Activated T-helper 1 cell treated with anti-CD3 and anti-CD28 coated beads, Interleukin-12 subunit alpha, Interleukin-12 subunit beta, Interleukin-2, Interleukin-4 antibody, amounts not matched to agents 30 ng/mL and 10 ng/mL and 1 ng/mL, durations not matched to agents 14 hours and 24 hours and 36 hours (primary cell): ENCODE measurements at regions of chr12 and their contacts with region 1.

Region 1: DNA sequence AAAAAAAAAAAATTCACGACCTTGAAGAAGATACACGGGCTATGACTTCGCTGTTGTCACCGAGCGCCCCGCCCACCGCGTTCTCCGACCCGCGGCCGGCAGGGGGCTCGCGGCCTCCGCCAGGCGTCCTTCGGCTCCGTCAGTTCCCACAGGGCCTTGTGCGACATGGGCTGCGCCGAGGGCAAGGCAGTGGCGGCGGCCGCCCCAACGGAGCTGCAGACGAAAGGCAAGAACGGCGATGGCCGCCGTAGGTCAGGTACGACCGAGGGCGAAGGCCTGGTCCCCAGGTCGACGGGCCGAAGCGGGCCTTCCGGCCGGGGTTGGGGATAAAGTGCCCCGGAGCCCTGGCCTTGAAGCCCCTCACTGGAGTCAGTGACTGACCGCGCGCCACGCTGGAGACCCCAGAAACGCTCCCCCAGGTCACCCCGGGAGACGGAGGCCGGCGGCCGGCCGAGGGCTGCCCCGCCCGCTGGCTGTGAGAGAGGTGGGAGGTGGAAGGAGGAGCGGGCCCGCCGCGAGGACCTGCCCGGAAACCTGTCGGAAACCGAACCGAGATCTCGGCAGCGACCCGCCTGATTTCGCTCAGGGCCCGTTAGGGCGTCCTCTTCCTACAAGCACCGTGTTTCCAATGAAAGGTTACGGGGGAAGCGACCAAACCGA is at the start of gene TXNRD1:
- DNase-seq: peak; percentile 79
- H3K4me3 Mint-ChIP-seq: peak within 1 kb of the TSS; percentile 82
- H3K27ac Mint-ChIP-seq: peak within 1 kb of the TSS; percentile 55
- H3K4me1 Mint-ChIP-seq: peaks cover 44% of the 10 kb centered on the region
- H3K27me3 Mint-ChIP-seq: peaks cover 6% of the 10 kb centered on the region
- total RNA-seq, gene TXNRD1: 93.3 and 103 TPM in 2 replicates

Region 2: DNA sequence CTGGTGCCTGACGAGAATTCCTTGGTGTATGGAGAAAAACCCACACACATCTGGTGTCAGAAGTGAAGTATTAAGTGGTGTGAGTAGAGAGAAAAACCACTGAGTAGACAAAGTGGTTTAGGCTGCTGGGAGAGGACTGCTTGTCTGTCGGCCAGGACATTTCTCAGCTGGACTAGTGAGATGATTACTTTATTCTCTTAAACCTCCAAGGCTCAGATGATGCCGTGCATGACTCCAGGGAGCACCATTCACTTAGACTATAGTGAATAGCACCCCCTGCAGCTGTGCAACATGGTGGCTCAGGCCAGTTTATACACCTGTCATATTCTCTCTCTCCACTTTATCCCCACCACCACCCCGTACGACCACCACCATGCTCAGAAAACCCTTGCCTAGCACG is 49.3 kb before region 1 on chr12:
- intact Hi-C with region 1: no loop called
- DNase-seq: no peak
- H3K4me3 Mint-ChIP-seq: no peak overlapping the region
- H3K27ac Mint-ChIP-seq: no peak overlapping the region
- H3K4me1 Mint-ChIP-seq: no peaks in the 10 kb centered on the region
- H3K27me3 Mint-ChIP-seq: peaks cover 6% of the 10 kb centered on the region

Region 3: DNA sequence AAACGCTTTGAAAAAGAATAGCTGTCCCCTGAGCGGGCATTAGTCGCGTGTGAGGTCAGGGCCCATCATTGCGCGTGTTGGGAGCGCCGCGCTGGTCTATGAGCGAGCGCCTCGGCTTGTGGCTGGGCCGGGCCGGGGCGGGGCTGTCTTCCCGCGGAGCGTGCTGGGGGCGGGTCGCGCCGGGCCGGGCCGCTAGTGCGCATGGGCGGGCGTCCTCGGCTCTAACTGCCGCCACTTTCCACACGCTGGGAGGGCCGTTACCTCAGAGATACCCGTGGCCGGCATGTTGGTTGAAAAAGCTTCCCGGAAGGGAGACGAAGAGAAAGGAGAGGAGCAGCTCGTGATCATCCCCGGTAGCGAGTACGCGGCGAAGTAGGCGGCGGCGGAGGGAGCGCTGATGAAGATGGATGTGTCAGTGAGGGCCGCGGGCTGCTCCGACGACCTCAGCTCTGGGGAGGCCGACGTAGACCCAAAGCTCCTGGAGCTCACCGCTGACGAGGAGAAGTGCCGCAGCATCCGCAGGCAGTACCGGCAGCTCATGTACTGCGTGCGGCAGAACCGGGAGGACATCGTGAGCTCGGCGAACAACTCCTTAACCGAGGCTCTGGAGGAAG is 87.9 kb after region 1 on chr12 and contains the start of gene EID3:
- intact Hi-C with region 1: loop called (anchors 1 kb)
- DNase-seq: peak; percentile 92
- H3K4me3 Mint-ChIP-seq: peak within 1 kb of the TSS; percentile 93
- H3K27ac Mint-ChIP-seq: peak within 1 kb of the TSS; percentile 99
- H3K4me1 Mint-ChIP-seq: peaks cover 66% of the 10 kb centered on the region
- H3K27me3 Mint-ChIP-seq: no peaks in the 10 kb centered on the region
- total RNA-seq, gene EID3: 10.5 and 10.6 TPM in 2 replicates

Region 4: GRCh38 chr12:104358347-104359003 is 142.7 kb after region 1 on chr12:
- intact Hi-C with region 1: loop called (anchors 1 kb)
- DNase-seq: peak; percentile 58
- H3K4me3 Mint-ChIP-seq: no peak overlapping the region
- H3K27ac Mint-ChIP-seq: no peak overlapping the region
- H3K4me1 Mint-ChIP-seq: peaks cover 7% of the 10 kb centered on the region
- H3K27me3 Mint-ChIP-seq: peaks cover 2% of the 10 kb centered on the region

Region 5: DNA sequence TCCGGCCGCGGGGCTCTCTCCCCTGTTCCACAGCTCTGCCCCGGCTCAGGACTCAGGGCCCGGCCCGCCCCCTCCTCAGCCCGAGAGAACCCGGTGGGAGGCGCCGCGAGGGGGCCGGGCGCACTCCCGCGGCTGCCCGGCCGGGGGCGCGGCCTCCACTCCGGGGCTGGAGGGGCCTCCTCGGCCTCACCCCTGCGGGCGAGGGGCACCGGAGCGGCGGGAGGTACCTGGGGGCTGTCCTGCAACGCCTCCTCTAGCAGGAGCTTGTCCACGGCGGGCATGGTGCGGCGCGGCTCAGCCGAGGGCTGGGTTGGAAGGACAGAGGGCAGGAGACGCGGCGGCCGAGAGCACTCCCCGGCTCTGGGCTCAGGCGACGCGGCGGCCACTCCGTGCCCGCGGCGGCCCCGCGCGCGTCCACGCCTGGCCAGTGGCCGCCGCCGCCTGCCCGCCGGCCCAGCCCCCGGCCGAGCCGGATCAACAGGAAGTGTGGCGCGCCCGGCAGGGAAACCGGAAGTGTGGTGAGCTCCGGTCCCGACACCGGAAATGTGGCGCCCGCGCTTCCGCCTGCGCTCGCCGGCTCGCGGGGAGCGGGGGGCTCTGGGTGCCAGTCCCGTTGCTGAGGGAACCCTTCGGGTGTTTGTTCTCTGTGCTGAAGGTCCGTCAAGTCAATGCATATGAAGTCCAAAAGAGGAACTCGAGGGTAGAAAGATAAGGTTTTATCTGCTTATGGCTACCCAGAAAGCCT is 1020.1 kb after region 1 on chr12 and contains the start of gene APPL2:
- intact Hi-C with region 1: loop called (anchors 5 kb)
- DNase-seq: peak; percentile 71
- H3K4me3 Mint-ChIP-seq: peak within 1 kb of the TSS; percentile 91
- H3K27ac Mint-ChIP-seq: peak within 1 kb of the TSS; percentile 77
- H3K4me1 Mint-ChIP-seq: peaks cover 32% of the 10 kb centered on the region
- H3K27me3 Mint-ChIP-seq: peaks cover 3% of the 10 kb centered on the region
- total RNA-seq, gene APPL2: 22.9 and 27.8 TPM in 2 replicates